Sciatic nerve (tissue), 2 donors: ENCODE measurements at regions of chr16 and their contacts with region 1.

Region 1: GRCh38 chr16:52451971-52452421 is 94.9 kb downstream of the TOX3 start:
- DNase-seq: no peak
- ATAC-seq: no peak

Region 2: DNA sequence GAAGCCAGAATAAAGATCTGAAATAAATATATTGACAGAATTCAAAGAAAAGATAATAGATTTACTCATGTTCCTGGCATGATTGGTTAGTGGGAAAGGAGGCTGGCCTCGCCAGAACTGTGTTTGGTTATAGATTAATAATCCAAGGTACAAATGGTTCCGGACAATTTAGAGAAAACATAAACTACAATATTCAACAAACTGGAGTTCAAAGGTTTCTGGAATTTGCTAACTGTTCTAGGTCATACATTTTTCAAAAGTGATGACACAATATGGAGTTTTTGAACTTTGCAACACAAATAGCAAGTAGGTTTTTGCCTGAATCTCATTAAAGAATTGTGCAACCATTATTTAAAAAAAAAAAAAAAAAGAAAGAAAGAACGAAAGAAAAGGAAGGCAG is 1049.2 kb before region 1 on chr16:
- intact Hi-C with region 1: no loop called
- DNase-seq: no peak
- ATAC-seq: peak; percentile 76

Region 3: GRCh38 chr16:51747329-51747728 is 704.7 kb before region 1 on chr16:
- intact Hi-C with region 1: loop called (anchors 5 kb)
- DNase-seq: no peak
- ATAC-seq: no peak

Region 4: DNA sequence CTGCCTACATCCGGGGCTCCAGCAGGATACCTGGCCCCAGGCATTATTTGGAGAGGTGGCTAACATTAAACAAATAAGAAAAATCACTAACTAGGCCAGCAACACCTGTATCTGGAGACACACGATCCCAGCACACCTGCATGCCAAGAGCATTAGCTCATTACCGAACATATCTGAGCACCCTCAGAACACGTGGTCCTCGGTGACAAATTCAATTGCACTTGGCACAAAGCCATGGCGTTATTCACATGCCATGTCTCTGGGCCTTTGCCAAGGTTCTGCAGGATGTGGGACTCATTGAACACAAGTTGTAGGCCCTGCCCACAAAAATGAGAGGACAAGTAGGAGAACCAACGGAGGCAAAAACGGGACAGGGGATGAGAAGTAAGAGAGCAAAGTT is 457.4 kb before region 1 on chr16:
- intact Hi-C with region 1: no loop called
- DNase-seq: no peak
- ATAC-seq: no peak

Region 5: DNA sequence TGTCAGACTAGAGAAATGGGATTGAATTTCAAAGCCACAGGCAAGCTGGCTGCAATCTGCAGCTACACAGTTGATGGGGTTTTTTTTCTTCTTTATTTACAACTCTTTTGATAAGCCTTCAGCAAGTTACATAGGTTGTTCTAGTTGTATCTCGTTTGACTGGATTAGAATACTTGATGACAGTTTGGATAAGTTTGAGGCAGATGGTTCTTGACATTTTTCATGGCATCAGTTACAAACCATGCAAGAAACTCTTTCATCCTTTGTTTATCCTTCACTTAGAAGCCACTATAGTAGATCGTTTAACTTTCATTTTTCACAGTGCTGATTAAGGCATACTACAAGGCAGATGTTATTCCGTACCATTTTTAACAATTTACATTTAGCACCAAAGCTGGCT is 143.9 kb before region 1 on chr16:
- intact Hi-C with region 1: no loop called
- DNase-seq: no peak
- ATAC-seq: no peak